ENCODE measurements at regions of chr15 and their contacts with region 1.

Region 1: GRCh38 chr15:71386448-71387236 is 271.4 kb downstream of the THSD4 start:
- DNase-seq: no peak
- ATAC-seq: peak in 2 of 4 donors; percentile 44 to 53
- H3K4me3 ChIP-seq: no peak overlapping the region
- H3K27ac ChIP-seq: peak overlapping the region in 3 of 12 donors; percentile 5 to 33 (median 9)
- H3K4me1 ChIP-seq: peaks cover 0 to 51% (median 14%) of the 10 kb centered on the region in 12 donors
- H3K27me3 ChIP-seq: no peaks in the 10 kb centered on the region
- CTCF ChIP-seq: peak; percentile 5 to 66 (median 41)
- POLR2A ChIP-seq: no peak

Region 2: DNA sequence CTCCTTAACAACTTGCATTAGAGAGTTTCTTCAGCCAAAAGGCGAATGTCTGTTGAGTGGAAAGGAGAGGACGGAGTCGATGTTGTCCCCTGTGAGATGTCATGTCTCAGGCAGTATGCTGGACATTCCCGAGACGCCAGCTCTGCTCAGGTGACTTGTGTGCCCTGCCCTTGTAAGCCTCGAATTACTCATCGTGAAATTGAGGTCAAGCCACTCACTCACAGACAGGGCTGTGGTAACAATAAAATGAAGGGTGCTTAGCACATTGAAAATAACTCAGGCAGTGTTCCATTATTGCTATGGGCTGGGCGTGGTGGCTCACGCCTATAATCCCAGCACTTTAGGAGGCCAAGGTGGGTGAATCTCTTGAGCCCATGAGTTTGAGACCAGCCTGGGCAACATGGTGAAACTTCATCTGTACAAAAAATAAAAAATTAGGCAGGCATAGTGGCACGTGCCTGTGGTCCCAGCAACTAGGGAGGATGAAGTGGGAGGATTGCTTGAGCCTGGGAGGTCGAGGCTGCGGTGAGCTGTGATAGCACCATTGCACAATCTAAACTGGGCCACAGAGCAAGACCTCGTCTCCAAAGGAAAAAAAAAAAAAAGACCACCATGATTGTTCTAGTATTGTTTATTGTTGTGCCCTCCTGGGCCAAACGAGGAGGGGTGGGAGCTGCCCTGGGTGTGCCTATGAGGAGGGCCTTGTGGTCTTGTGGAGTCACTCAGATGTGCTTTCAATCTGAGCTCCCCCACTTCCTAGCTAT is 57.0 kb before region 1 on chr15:
- intact Hi-C with region 1: loop called in 1 of 10 experiments (anchors 10 kb)
- DNase-seq: peak in 3 of 5 donors; percentile 26 to 51 (median 47)
- ATAC-seq: peak; percentile 66 to 82 (median 74)
- H3K4me3 ChIP-seq: no peak overlapping the region
- H3K27ac ChIP-seq: peak overlapping the region; percentile 14 to 94 (median 78)
- H3K4me1 ChIP-seq: peaks cover 0 to 59% (median 26%) of the 10 kb centered on the region in 12 donors
- H3K27me3 ChIP-seq: no peaks in the 10 kb centered on the region
- CTCF ChIP-seq: no peak
- POLR2A ChIP-seq: no peak

Region 3: DNA sequence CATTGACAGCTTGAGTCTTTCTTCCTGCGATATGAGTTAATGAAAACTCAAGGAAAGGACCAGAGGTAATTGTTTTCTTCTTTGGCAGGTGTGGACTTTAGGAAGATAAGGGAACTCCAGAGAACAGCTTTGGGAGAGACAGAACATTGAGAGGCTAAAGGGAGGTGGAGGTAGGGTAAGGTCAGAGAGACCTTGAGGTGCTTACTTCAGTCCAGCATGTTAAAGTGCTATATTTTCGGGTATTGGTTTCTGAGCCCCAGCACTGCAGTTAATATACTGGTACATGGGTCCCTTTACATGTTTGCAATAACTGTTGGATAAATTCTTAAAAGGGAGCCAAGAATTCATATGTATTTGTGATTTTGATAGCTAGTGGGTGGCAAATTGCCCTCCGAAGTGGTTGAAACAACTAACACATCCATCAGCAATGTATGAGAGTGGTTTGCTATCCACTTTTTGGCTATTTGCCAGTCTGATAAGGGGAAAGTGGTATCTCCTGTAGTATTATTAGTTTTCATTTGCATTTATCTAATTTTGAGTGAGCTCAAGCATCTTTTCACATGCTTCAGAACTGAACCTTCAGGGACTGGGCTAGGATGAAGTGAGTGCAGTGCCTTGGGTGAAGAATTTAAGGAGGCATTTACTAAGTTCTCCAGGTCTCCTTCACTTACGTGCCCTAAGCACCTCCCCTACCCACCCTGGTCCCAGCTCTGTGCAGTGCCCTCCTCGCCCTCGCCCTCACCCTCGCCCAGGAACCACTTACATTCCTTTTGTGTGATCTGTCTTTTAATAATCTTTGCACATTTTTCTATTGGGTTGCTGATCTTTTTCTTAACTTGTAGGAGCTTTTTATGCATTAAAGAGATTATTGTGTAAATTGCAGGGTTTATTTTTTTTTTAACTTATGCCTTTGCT is 51.0 kb after region 1 on chr15:
- intact Hi-C with region 1: loop called in 7 of 10 experiments (anchors 2 to 5 kb)
- DNase-seq: no peak
- ATAC-seq: peak in 1 of 4 donors; percentile 57
- H3K4me3 ChIP-seq: no peak overlapping the region
- H3K27ac ChIP-seq: peak overlapping the region in 4 of 12 donors; percentile 15 to 54 (median 36)
- H3K4me1 ChIP-seq: peaks cover 0 to 14% (median 6%) of the 10 kb centered on the region in 12 donors
- H3K27me3 ChIP-seq: no peaks in the 10 kb centered on the region
- CTCF ChIP-seq: no peak
- POLR2A ChIP-seq: no peak

Region 4: DNA sequence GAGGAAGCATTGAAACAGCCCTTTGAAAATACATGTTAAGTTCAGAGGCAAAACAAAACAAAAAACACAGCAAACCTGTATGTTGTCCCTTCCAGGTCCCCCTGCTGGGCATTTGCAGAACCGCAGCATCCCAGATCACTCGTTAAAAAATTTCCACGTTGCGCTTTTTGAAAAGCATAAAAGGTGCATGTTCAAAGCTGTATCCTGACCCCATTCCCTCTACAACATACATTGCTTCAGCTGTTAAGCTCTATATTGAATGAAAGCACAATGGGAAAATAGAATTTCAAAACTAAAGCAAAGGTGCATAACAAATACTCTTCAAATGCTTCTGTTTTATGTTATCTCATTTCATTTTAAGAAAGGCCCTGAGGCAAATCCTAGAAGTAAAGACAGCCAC is 56.9 kb after region 1 on chr15:
- intact Hi-C with region 1: loop called in 6 of 10 experiments (anchors 2 to 5 kb)
- DNase-seq: peak in 3 of 5 donors; percentile 40 to 43 (median 42)
- ATAC-seq: peak in 2 of 4 donors; percentile 7 to 10
- H3K4me3 ChIP-seq: no peak overlapping the region
- H3K27ac ChIP-seq: peak overlapping the region in 5 of 12 donors; percentile 13 to 65 (median 41)
- H3K4me1 ChIP-seq: peaks cover 0 to 50% (median 15%) of the 10 kb centered on the region in 12 donors
- H3K27me3 ChIP-seq: no peaks in the 10 kb centered on the region
- CTCF ChIP-seq: peak; percentile 70 to 88 (median 82)
- POLR2A ChIP-seq: no peak

Region 5: DNA sequence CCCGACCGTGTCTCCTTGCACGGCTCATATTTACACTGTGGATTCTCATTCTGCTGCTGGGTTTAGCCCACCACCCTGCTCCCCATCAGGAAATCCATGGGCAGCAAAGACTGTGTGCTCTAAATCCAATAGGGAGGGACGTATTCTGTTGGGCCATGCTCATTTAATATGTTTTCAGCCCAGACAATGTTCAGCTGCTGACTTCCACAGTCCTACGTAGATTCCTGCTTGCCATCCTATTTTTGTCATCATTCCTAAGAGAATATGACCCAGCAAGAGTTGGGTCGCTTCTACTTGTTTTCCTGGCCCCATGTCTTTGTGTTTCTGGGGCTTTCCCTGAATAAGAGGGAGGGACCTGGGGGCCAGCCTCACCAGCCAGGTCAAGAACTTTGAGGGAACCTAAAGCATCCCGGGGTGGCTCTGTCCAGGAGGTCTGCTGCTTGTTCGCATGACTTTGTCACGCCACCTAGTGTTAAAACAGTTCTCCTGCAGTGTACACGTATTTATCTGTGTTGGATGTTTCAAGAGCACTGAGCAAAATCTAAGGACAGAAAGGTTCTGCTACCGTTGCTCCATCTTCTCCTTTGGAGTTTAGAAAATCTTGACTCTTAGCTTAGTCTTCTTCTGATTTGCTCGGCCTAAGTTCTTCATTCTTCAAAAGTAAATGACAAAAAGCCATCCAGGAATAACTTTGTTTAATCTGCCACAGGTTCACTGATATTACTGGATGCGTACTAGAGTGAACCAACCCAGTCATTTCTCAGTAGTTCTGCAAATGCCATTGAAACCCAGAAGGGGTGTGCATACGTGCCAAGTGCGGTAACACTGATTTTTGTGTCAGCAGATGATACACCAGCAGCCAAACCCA is 343.9 kb after region 1 on chr15:
- intact Hi-C with region 1: loop called in 1 of 10 experiments (anchors 10 kb)
- DNase-seq: peak in 3 of 5 donors; percentile 48 to 58 (median 51)
- ATAC-seq: peak; percentile 75 to 82 (median 80)
- H3K4me3 ChIP-seq: no peak overlapping the region
- H3K27ac ChIP-seq: peak overlapping the region in 6 of 12 donors; percentile 0 to 54 (median 19)
- H3K4me1 ChIP-seq: peaks cover 0 to 29% (median 8%) of the 10 kb centered on the region in 12 donors
- H3K27me3 ChIP-seq: no peaks in the 10 kb centered on the region
- CTCF ChIP-seq: peak; percentile 65 to 86 (median 79)
- POLR2A ChIP-seq: no peak

Region 6: DNA sequence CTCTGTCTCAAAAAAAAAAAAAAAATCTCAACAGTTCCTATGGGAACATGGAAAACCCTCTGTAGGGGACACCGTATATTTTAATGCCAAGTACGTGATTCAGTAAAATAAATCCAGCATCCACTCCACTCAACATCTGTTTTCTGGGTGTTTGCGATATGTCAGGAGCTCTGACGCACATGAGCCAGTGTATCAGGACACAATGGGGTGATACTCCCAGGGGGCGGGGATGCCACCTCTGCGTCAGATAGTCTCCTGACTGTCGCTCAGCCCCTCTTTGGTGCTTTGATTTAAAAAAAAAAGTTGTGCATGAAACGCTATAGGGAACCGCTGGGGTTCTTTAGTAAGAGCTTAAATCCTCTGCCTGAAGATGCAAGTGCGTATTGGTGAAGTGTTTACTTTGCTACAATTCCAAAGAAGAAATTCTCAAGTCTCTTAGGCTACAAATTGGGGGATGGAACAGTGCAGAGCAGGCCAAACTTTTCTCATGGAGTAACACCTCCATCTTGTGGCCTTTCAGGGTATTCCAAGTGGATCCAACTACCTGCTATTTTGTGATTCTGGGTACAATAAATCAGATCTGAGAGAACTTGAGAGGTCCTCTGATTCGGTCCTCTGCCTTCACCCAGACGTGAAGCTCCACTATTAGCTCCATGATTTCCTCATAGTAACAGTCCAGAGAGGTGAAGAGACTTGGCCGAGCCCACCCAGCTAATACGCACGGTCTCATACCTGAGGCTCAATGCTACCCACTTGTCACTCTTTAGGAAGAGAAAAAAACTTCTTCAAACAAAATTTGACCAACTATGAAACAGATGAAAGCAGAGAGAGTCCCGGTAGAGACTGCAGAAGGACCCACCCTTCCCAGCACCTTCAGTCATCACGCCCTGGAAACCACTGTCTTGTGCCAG is 414.4 kb after region 1 on chr15:
- intact Hi-C with region 1: loop called in 1 of 10 experiments (anchors 5 kb)
- DNase-seq: no peak
- ATAC-seq: peak; percentile 57 to 84 (median 82)
- H3K4me3 ChIP-seq: no peak overlapping the region
- H3K27ac ChIP-seq: no peak overlapping the region
- H3K4me1 ChIP-seq: peaks cover 0 to 8% (median 2%) of the 10 kb centered on the region in 12 donors
- H3K27me3 ChIP-seq: no peaks in the 10 kb centered on the region
- CTCF ChIP-seq: peak; percentile 72 to 91 (median 84)
- POLR2A ChIP-seq: no peak